CD8-positive, alpha-beta T cell (primary cell): ENCODE measurements at regions of chr1 and their contacts with region 1.

Region 1: GRCh38 chr1:67149179-67149770 is 14.5 kb upstream of the C1orf141 start:
- DNase-seq: peak; percentile 16 to 81 (median 62)
- ATAC-seq: peak; percentile 90
- H3K4me3 ChIP-seq: no peak overlapping the region
- H3K4me3 Mint-ChIP-seq: no peak overlapping the region
- H3K27ac ChIP-seq: no peak overlapping the region
- H3K27ac Mint-ChIP-seq: no peak overlapping the region
- H3K4me1 ChIP-seq: peaks cover 6% of the 10 kb centered on the region
- H3K4me1 Mint-ChIP-seq: peaks cover 23% of the 10 kb centered on the region
- H3K27me3 ChIP-seq: no peaks in the 10 kb centered on the region
- H3K27me3 Mint-ChIP-seq: peaks cover 7% of the 10 kb centered on the region
- CTCF ChIP-seq: peak; percentile 85

Region 2: GRCh38 chr1:66137235-66137634 is 1012.0 kb before region 1 on chr1:
- CTCF ChIA-PET with region 1: no interaction called
- POLR2A ChIA-PET with region 1: no interaction called
- intact Hi-C with region 1: no loop called
- DNase-seq: no peak
- ATAC-seq: no peak
- H3K4me3 ChIP-seq: no peak overlapping the region
- H3K4me3 Mint-ChIP-seq: no peak overlapping the region
- H3K27ac ChIP-seq: no peak overlapping the region
- H3K27ac Mint-ChIP-seq: no peak overlapping the region
- H3K4me1 ChIP-seq: no peaks in the 10 kb centered on the region
- H3K4me1 Mint-ChIP-seq: no peaks in the 10 kb centered on the region
- H3K27me3 ChIP-seq: no peaks in the 10 kb centered on the region
- H3K27me3 Mint-ChIP-seq: peaks cover 11% of the 10 kb centered on the region
- CTCF ChIP-seq: no peak

Region 3: GRCh38 chr1:66758241-66758755 is 391.0 kb before region 1 on chr1:
- CTCF ChIA-PET with region 1: interaction called, 90 read pairs
- POLR2A ChIA-PET with region 1: no interaction called
- intact Hi-C with region 1: no loop called
- DNase-seq: no peak
- ATAC-seq: no peak
- H3K4me3 ChIP-seq: no peak overlapping the region
- H3K4me3 Mint-ChIP-seq: no peak overlapping the region
- H3K27ac ChIP-seq: no peak overlapping the region
- H3K27ac Mint-ChIP-seq: no peak overlapping the region
- H3K4me1 ChIP-seq: no peaks in the 10 kb centered on the region
- H3K4me1 Mint-ChIP-seq: no peaks in the 10 kb centered on the region
- H3K27me3 ChIP-seq: peaks cover 0 to 4% of the 10 kb centered on the region in 2 experiments
- H3K27me3 Mint-ChIP-seq: peaks cover 10% of the 10 kb centered on the region
- CTCF ChIP-seq: no peak

Region 4: GRCh38 chr1:66929999-66930822 is 219.1 kb before region 1 on chr1:
- CTCF ChIA-PET with region 1: interaction called, 9 read pairs
- POLR2A ChIA-PET with region 1: no interaction called
- intact Hi-C with region 1: loop called in 1 of 2 experiments (anchors 2 kb)
- DNase-seq: peak; percentile 88 to 97 (median 95)
- ATAC-seq: peak; percentile 70
- H3K4me3 ChIP-seq: peak overlapping the region; percentile 86 to 90
- H3K4me3 Mint-ChIP-seq: peak overlapping the region; percentile 86
- H3K27ac ChIP-seq: peak overlapping the region; percentile 87 to 90
- H3K27ac Mint-ChIP-seq: peak overlapping the region; percentile 94
- H3K4me1 ChIP-seq: peaks cover 40% of the 10 kb centered on the region
- H3K4me1 Mint-ChIP-seq: peaks cover 61% of the 10 kb centered on the region
- H3K27me3 ChIP-seq: no peaks in the 10 kb centered on the region
- H3K27me3 Mint-ChIP-seq: no peaks in the 10 kb centered on the region
- CTCF ChIP-seq: peak; percentile 17

Region 5: DNA sequence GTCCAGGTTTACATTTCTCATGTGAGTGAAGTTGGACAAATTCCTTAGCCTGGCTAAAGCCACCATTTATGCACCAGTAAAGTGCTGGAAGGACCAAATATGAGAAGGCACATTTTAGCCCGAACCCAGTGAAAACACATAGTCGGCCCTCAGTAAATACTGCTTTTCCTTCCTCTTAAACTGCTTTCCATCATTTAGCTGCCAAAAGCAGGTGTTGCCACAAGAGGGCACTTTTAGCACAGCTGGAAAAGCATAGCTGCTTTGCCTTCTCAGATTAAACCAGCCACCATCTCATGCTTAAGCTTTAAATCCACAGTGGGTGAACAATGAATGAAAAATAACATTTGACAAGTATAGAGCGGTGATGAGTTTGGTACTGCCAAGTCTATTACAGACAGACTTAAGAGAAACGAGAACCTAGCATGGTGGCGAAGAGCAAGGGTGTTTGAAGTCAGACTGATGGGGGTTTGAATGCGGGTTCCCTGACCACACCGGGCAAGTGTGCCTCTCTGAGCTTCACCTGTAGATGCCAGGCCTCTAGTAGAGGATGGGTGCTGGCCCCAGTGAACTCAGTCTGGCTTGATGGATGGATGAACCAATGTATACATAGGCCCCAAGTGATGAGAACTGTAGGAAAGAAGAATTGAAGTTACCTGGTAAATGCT is 153.1 kb before region 1 on chr1:
- CTCF ChIA-PET with region 1: interaction called, 91 read pairs
- POLR2A ChIA-PET with region 1: interaction called, 4 read pairs
- intact Hi-C with region 1: loop called (anchors 1 kb)
- DNase-seq: peak; percentile 29 to 74 (median 57)
- ATAC-seq: peak; percentile 86
- H3K4me3 ChIP-seq: no peak overlapping the region
- H3K4me3 Mint-ChIP-seq: no peak overlapping the region
- H3K27ac ChIP-seq: no peak overlapping the region
- H3K27ac Mint-ChIP-seq: peak overlapping the region; percentile 32
- H3K4me1 ChIP-seq: peaks cover 5% of the 10 kb centered on the region
- H3K4me1 Mint-ChIP-seq: peaks cover 21% of the 10 kb centered on the region
- H3K27me3 ChIP-seq: no peaks in the 10 kb centered on the region
- H3K27me3 Mint-ChIP-seq: no peaks in the 10 kb centered on the region
- CTCF ChIP-seq: peak; percentile 70

Region 6: DNA sequence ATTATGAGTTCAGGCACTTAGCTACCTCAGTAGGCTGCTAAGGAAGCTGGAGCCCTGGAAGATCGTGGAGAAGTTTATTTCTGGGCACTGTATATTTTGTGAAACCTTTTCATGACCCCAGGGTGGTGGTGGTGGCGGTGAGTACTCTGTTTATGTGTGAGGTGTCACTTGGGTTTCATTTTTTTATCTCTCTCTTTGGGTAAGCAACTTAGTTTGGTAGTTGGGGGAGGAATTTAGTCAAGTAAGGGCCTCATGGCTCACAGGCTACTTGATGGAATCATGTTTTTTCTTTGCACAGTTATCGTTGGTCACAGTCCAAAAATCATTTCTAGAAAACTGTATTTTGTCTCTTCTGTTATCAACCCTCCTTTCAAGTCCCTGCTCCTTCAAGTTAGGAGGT is 48.4 kb before region 1 on chr1:
- CTCF ChIA-PET with region 1: interaction called, 3 read pairs
- POLR2A ChIA-PET with region 1: no interaction called
- intact Hi-C with region 1: loop called in 1 of 2 experiments (anchors 5 kb)
- DNase-seq: no peak
- ATAC-seq: no peak
- H3K4me3 ChIP-seq: no peak overlapping the region
- H3K4me3 Mint-ChIP-seq: no peak overlapping the region
- H3K27ac ChIP-seq: no peak overlapping the region
- H3K27ac Mint-ChIP-seq: no peak overlapping the region
- H3K4me1 ChIP-seq: no peaks in the 10 kb centered on the region
- H3K4me1 Mint-ChIP-seq: no peaks in the 10 kb centered on the region
- H3K27me3 ChIP-seq: no peaks in the 10 kb centered on the region
- H3K27me3 Mint-ChIP-seq: no peaks in the 10 kb centered on the region
- CTCF ChIP-seq: no peak

Region 7: DNA sequence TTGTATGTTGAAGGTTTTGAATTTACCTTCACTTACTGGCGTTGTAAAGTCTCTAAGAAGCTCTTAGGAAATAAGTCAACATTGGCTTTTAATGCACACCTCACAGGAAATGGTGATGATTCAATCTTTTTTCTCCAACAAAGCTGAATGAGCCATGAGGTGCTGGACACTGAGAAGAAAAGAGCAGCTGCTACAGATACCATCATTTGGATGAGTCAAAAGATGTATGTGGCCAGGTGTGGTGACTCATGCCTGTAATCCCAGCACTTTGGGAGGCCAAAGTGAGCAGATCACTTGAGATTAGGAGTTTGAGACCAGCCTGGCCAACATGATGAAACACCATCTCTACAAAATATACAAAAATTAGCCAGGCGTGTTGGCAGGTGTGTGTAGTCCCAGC is 13.7 kb after region 1 on chr1:
- CTCF ChIA-PET with region 1: interaction called, 43 read pairs
- POLR2A ChIA-PET with region 1: interaction called, 6 read pairs
- intact Hi-C with region 1: no loop called
- DNase-seq: peak in 3 of 9 experiments; percentile 13 to 27 (median 22)
- ATAC-seq: peak; percentile 60
- H3K4me3 ChIP-seq: no peak overlapping the region
- H3K4me3 Mint-ChIP-seq: no peak overlapping the region
- H3K27ac ChIP-seq: no peak overlapping the region
- H3K27ac Mint-ChIP-seq: no peak overlapping the region
- H3K4me1 ChIP-seq: no peaks in the 10 kb centered on the region
- H3K4me1 Mint-ChIP-seq: peaks cover 7% of the 10 kb centered on the region
- H3K27me3 ChIP-seq: no peaks in the 10 kb centered on the region
- H3K27me3 Mint-ChIP-seq: peaks cover 3% of the 10 kb centered on the region
- CTCF ChIP-seq: no peak

Region 8: DNA sequence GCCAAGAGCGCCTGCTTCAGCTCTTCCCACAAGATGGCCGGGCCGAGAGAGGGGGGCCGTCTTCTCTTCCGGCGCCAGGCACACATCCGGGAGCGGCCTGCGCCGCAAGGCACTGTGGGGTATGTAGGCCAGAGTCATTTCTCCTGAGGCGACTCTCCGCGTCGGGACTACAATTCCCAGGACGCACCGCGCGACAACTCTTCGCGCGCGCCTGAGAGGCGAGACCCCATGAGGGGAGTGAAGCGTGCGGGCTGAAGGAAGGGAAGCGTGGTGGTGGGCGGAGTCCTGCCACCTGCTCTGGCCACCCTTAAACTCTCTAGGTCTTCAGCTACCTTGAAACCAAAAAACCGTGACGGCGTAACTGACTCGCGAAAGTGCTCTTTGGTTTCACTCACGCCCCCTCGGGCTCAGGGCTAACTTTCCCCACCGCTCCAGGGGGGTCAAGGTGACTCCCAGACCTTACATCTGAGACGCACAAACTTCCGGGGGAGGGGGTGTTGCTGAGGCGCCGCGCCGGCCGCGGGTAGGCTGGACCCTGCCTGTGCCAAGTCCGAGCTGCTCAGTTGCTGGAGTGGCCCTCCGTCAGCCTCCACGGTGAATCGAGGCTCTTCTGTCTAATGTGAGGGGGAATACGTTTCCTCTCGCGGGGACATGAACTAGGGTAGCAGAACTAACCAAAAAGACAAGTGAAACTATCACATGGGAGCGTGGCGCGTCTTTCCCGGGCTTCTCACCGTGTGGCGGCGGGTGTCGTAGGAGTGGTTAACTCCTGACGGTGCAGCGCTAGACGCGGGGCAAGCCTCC is 281.3 kb after region 1 on chr1 and contains the start of gene SERBP1:
- CTCF ChIA-PET with region 1: interaction called, 4 read pairs
- POLR2A ChIA-PET with region 1: no interaction called
- intact Hi-C with region 1: loop called in 1 of 2 experiments (anchors 10 kb)
- DNase-seq: peak; percentile 89 to 99 (median 95)
- ATAC-seq: peak; percentile 84
- H3K4me3 ChIP-seq: peak within 1 kb of the TSS; percentile 86 to 94
- H3K4me3 Mint-ChIP-seq: peak within 1 kb of the TSS; percentile 92
- H3K27ac ChIP-seq: peak within 1 kb of the TSS; percentile 86 to 98
- H3K27ac Mint-ChIP-seq: peak within 1 kb of the TSS; percentile 95
- H3K4me1 ChIP-seq: peaks cover 31% of the 10 kb centered on the region
- H3K4me1 Mint-ChIP-seq: peaks cover 54% of the 10 kb centered on the region
- H3K27me3 ChIP-seq: no peaks in the 10 kb centered on the region
- H3K27me3 Mint-ChIP-seq: no peaks in the 10 kb centered on the region
- CTCF ChIP-seq: no peak
- total RNA-seq, gene SERBP1: 136 to 143 TPM